Activated CD4-positive, alpha-beta T cell treated with anti-CD3 and anti-CD28 coated beads, Interleukin-2, amount 10 ng/mL, durations not matched to agents 24 days and 14 days (primary cell): ENCODE measurements at regions of chr12 and their contacts with region 1.

Region 1: GRCh38 chr12:116236148-116236731 is 41.3 kb downstream of the MED13L start:
- DNase-seq: peak; percentile 81
- H3K4me3 Mint-ChIP-seq: peak overlapping the region; percentile 39
- H3K27ac Mint-ChIP-seq: peak overlapping the region; percentile 45
- H3K4me1 Mint-ChIP-seq: peaks cover 17% of the 10 kb centered on the region
- H3K27me3 Mint-ChIP-seq: no peaks in the 10 kb centered on the region

Region 2: GRCh38 chr12:116015525-116015924 is 220.7 kb before region 1 on chr12:
- intact Hi-C with region 1: loop called (anchors 5 kb)
- DNase-seq: no peak
- H3K4me3 Mint-ChIP-seq: no peak overlapping the region
- H3K27ac Mint-ChIP-seq: no peak overlapping the region
- H3K4me1 Mint-ChIP-seq: no peaks in the 10 kb centered on the region
- H3K27me3 Mint-ChIP-seq: no peaks in the 10 kb centered on the region

Region 3: GRCh38 chr12:116066381-116067230 is 169.6 kb before region 1 on chr12:
- intact Hi-C with region 1: loop called (anchors 1 kb)
- DNase-seq: peak; percentile 85
- H3K4me3 Mint-ChIP-seq: no peak overlapping the region
- H3K27ac Mint-ChIP-seq: no peak overlapping the region
- H3K4me1 Mint-ChIP-seq: peaks cover 6% of the 10 kb centered on the region
- H3K27me3 Mint-ChIP-seq: no peaks in the 10 kb centered on the region

Region 4: GRCh38 chr12:116397148-116397547 is 160.9 kb after region 1 on chr12:
- intact Hi-C with region 1: no loop called
- DNase-seq: no peak
- H3K4me3 Mint-ChIP-seq: no peak overlapping the region
- H3K27ac Mint-ChIP-seq: no peak overlapping the region
- H3K4me1 Mint-ChIP-seq: peaks cover 2% of the 10 kb centered on the region
- H3K27me3 Mint-ChIP-seq: peaks cover 7% of the 10 kb centered on the region